Activated CD8-positive, alpha-beta T cell treated with anti-CD3 and anti-CD28 coated beads for 36 hours (primary cell): ENCODE measurements at regions of chr11 and their contacts with region 1.

Region 1: GRCh38 chr11:17384002-17384511 is 4.4 kb downstream of the KCNJ11 start:
- DNase-seq: peak; percentile 87
- ATAC-seq: peak; percentile 76
- H3K4me3 Mint-ChIP-seq: no peak overlapping the region
- H3K27ac Mint-ChIP-seq: no peak overlapping the region
- H3K4me1 Mint-ChIP-seq: peaks cover 2% of the 10 kb centered on the region
- H3K27me3 Mint-ChIP-seq: no peaks in the 10 kb centered on the region
- CTCF ChIP-seq: peak; percentile 90

Region 2: GRCh38 chr11:17221968-17222367 is 162.1 kb before region 1 on chr11:
- CTCF ChIA-PET with region 1: interaction called, 11 read pairs
- POLR2A ChIA-PET with region 1: no interaction called
- intact Hi-C with region 1: no loop called
- DNase-seq: no peak
- ATAC-seq: no peak
- H3K4me3 Mint-ChIP-seq: no peak overlapping the region
- H3K27ac Mint-ChIP-seq: no peak overlapping the region
- H3K4me1 Mint-ChIP-seq: no peaks in the 10 kb centered on the region
- H3K27me3 Mint-ChIP-seq: no peaks in the 10 kb centered on the region
- CTCF ChIP-seq: no peak

Region 3: GRCh38 chr11:17267561-17267960 is 116.5 kb before region 1 on chr11:
- CTCF ChIA-PET with region 1: no interaction called
- POLR2A ChIA-PET with region 1: no interaction called
- intact Hi-C with region 1: no loop called
- DNase-seq: peak; percentile 22
- ATAC-seq: peak; percentile 81
- H3K4me3 Mint-ChIP-seq: no peak overlapping the region
- H3K27ac Mint-ChIP-seq: no peak overlapping the region
- H3K4me1 Mint-ChIP-seq: peaks cover 12% of the 10 kb centered on the region
- H3K27me3 Mint-ChIP-seq: no peaks in the 10 kb centered on the region
- CTCF ChIP-seq: no peak

Region 4: GRCh38 chr11:17354601-17354991 is 29.5 kb before region 1 on chr11:
- CTCF ChIA-PET with region 1: interaction called, 20 read pairs
- POLR2A ChIA-PET with region 1: interaction called, 4 read pairs
- intact Hi-C with region 1: no loop called
- DNase-seq: peak; percentile 87
- ATAC-seq: peak; percentile 45
- H3K4me3 Mint-ChIP-seq: peak overlapping the region; percentile 87
- H3K27ac Mint-ChIP-seq: peak overlapping the region; percentile 34
- H3K4me1 Mint-ChIP-seq: peaks cover 34% of the 10 kb centered on the region
- H3K27me3 Mint-ChIP-seq: no peaks in the 10 kb centered on the region
- CTCF ChIP-seq: peak; percentile 80

Region 5: DNA sequence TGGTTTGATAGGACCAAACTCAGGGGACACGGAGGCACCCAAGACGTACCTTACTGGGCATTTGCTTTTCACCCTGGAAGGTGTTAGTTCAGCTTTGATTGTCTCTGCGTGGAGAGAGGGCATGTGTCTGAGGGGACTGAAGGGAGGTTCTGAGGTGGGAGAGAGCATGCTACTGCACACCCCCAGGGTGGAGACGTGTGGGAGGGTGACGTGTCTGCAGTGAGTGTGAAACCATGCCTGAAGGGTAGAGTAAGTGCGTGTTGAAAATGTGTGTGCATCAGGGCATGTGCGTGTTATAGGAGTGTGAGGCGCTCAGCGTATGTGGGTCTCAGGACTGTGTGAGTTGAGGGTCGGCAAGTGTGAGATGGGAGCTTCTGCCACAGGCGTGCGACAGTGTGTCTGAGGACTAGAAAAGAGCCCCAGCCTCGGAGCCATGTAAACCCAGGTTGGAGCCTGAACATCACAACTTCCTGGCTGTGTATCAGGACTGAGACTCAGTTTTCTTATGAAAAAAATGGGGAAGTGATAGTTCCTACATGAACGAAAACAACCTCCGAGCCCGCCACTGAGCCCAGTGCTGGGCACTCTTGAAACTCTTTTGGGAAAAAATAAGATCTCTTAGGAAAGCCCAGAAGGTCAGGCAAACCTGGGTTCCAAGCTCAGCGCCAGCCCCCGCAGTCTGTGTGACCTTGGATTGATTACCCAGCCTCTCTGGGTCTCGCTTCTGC is 16.2 kb after region 1 on chr11:
- CTCF ChIA-PET with region 1: interaction called, 20 read pairs
- POLR2A ChIA-PET with region 1: no interaction called
- intact Hi-C with region 1: no loop called
- DNase-seq: no peak
- ATAC-seq: no peak
- H3K4me3 Mint-ChIP-seq: no peak overlapping the region
- H3K27ac Mint-ChIP-seq: no peak overlapping the region
- H3K4me1 Mint-ChIP-seq: no peaks in the 10 kb centered on the region
- H3K27me3 Mint-ChIP-seq: no peaks in the 10 kb centered on the region
- CTCF ChIP-seq: no peak

Region 6: DNA sequence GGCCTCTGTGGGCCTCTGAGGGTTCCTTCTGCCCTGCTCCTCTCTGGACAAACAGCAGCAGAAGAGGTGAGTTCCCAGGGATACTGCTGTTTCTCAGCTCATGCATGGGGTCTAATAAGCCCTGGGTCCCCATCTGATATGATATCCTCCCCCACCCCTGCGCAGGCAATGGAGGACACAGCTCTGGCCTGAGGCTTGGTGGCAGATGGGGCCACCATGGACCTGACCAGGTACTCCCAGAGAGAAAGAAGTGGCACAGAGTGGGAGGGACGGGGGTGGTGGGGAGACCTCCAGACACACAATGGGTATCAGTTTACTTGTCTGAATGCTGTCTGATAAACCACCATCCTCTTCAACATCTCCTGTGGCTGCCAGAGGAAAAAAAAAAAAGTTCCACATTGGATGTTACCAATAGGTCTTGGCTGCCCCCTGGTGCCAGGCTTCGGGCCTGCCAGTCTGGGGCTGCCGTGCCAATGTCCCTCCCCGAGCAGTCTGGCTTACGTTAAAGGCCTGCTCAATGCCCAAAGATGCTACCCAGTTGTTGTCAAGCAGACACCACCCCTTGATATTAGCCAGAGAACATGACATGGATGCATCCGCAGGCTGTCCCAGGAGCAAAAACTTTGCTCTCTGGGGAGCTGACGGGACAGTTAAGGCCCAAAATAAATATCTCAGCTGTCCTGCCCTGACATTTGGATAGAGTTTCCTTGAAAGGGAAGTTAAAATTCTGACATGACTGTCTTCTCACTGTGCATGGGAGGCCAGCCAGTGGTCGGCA is 120.5 kb after region 1 on chr11:
- CTCF ChIA-PET with region 1: interaction called, 167 read pairs
- POLR2A ChIA-PET with region 1: no interaction called
- intact Hi-C with region 1: loop called (anchors 1 kb)
- DNase-seq: peak; percentile 87
- ATAC-seq: peak; percentile 91
- H3K4me3 Mint-ChIP-seq: no peak overlapping the region
- H3K27ac Mint-ChIP-seq: no peak overlapping the region
- H3K4me1 Mint-ChIP-seq: no peaks in the 10 kb centered on the region
- H3K27me3 Mint-ChIP-seq: peaks cover 7% of the 10 kb centered on the region
- CTCF ChIP-seq: peak; percentile 86

Region 7: DNA sequence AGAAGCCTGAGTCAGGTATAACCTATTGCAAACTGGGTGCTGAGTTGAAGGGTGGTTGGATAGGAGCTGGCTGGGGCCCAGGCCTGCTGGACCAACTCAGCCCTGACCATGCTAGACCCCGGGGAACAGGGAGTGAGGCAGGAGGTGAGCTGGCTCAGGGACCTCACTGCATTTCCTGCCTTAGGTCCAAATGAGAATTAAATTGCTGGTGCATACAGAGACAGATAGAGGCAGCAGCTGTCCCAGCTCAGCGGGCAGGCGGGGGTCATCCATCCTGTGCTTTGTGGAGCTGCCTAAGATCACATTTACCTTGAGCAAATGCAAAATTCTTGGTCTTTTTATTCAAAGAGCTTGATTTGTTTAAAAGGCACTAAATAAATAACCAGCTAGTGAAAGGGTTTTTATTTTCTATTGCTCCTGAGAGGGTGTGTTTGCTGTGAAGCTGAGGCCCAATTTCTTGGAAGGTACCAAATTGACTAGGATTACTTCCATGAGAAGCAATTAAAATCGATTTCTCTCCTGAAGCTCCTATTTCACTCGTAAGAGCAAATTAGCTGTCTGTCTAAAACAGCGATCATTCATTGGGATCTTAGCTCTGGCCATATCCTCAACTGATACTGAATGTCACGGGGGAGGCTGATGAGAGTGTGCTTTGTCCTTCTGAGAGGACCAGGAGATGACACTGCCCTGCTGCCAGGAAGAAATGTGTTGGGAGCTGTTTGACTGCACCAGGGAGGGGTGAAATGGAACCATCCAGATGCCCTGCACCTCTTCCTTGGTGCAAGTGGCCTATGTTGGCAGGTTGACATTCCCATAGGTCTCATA is 135.2 kb after region 1 on chr11:
- CTCF ChIA-PET with region 1: interaction called, 20 read pairs
- POLR2A ChIA-PET with region 1: no interaction called
- intact Hi-C with region 1: no loop called
- DNase-seq: no peak
- ATAC-seq: no peak
- H3K4me3 Mint-ChIP-seq: no peak overlapping the region
- H3K27ac Mint-ChIP-seq: no peak overlapping the region
- H3K4me1 Mint-ChIP-seq: no peaks in the 10 kb centered on the region
- H3K27me3 Mint-ChIP-seq: no peaks in the 10 kb centered on the region
- CTCF ChIP-seq: no peak

Region 8: DNA sequence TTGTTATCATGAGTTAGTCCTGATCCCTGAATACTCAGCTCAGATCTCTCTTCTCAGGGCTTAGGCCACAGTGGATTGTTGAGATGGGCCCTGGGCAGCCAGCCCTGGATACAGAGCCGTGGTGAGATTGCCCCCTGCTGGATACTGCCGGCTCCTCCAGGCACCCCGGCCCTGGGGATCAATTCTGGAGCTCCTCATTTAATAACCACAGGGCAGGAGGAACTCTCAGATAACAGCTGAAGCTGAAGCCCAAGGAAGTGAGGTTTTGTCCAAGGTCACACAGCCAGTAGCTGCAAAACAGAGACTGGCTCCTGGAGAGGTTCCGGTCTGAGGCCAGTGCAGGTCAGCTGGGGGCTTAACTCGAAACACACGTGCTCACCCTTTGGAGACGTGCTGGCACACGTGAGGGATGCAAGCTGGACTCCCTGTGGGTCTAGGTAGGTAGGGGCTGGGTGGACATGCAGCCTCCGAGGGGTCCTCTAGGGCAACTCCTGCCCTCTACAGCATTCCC is 144.2 kb after region 1 on chr11:
- CTCF ChIA-PET with region 1: interaction called, 39 read pairs
- POLR2A ChIA-PET with region 1: no interaction called
- intact Hi-C with region 1: no loop called
- DNase-seq: peak; percentile 70
- ATAC-seq: peak; percentile 92
- H3K4me3 Mint-ChIP-seq: no peak overlapping the region
- H3K27ac Mint-ChIP-seq: no peak overlapping the region
- H3K4me1 Mint-ChIP-seq: no peaks in the 10 kb centered on the region
- H3K27me3 Mint-ChIP-seq: peaks cover 7% of the 10 kb centered on the region
- CTCF ChIP-seq: peak; percentile 72